ENCODE measurements at regions of chr17 and their contacts with region 1.

Region 1: DNA sequence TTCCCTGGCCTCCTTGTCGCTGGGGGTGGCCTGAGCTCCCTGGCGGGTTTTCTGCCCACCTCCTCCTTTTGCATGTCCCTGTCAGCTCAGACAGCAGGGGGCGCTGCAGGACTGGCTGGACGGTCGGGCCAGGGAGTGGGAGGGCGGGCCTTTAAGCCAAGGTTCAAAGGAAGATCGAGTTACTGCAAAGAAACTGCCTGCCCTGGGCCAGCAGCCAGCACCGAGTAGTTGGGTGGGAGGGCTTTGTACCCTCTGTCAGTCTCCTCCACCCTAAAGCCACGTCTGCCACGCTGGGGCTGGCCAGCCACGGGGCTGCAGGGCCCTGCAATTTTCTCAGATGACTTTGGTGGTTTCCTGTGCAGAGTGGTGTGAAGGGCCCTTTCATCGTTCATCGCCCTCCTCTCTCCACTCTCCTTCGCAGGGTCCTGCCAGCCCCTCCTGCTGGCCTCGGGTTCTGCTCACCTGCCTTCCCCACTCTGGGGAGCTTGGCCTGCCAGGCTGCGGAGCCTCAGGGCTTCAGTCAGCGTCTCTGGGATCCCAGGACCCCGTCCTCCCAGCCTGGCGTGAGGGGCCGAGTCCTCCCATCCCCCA is 12.3 kb downstream of the GPR142 start:
- DNase-seq: peak; percentile 93 to 95 (median 94)
- ATAC-seq: peak; percentile 90
- H3K4me3 ChIP-seq: no peak overlapping the region
- H3K27ac ChIP-seq: no peak overlapping the region
- H3K4me1 ChIP-seq: peaks cover 19% of the 10 kb centered on the region
- H3K27me3 ChIP-seq: no peaks in the 10 kb centered on the region
- CTCF ChIP-seq: peak; percentile 80 to 97 (median 95)
- POLR2A ChIP-seq: no peak

Region 2: DNA sequence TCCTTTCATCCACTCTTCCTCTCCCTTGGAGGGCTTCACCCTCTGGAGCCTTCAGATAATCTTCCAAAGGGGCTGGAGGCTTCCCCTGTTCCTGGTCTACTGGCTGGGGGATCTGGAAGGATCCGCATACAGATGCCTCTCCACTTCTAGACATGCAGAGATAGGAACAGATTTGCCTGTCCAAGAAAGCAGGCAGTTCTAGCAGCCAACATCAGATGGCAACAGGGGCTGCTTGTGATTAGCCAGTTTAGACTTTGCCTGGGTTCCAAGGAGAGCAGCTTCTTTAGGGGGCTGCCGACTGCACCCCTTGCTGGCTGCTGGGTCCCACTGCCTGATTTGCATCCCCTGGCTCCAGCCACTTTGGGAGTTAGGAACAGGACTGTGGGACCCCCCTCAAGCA is 80.7 kb after region 1 on chr17:
- intact Hi-C with region 1: loop called (anchors 2 kb)
- DNase-seq: no peak
- ATAC-seq: no peak
- H3K4me3 ChIP-seq: no peak overlapping the region
- H3K27ac ChIP-seq: no peak overlapping the region
- H3K4me1 ChIP-seq: peaks cover 7% of the 10 kb centered on the region
- H3K27me3 ChIP-seq: no peaks in the 10 kb centered on the region
- CTCF ChIP-seq: no peak
- POLR2A ChIP-seq: no peak

Region 3: DNA sequence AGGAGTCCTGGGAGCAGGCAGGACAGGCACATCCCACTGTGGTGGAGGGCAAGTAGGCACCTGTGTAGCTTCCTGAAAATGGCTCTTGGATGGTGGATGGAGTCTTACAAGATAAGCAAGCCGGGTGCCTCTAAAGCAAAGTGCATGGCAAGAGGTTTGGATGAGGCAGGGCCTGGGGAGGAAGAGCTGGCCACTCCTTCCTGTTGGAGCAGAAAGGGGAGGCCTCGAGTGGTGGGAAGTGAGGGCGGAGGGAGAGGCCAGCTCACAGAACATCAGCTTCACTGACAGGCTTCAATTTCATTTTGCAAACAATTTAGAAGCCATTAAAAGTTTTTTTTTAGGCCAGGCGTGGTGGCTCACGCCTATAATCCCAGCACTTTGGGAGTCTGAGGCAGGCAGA is 117.9 kb after region 1 on chr17:
- intact Hi-C with region 1: no loop called
- DNase-seq: no peak
- ATAC-seq: no peak
- H3K4me3 ChIP-seq: no peak overlapping the region
- H3K27ac ChIP-seq: no peak overlapping the region
- H3K4me1 ChIP-seq: no peaks in the 10 kb centered on the region
- H3K27me3 ChIP-seq: no peaks in the 10 kb centered on the region
- CTCF ChIP-seq: no peak
- POLR2A ChIP-seq: no peak